Endothelial cell of umbilical vein (primary cell): ENCODE measurements at regions of chr14 and their contacts with region 1.

Region 1: GRCh38 chr14:103788086-103788485 is 59.3 kb downstream of the PPP1R13B start:
- DNase-seq: no peak
- H3K4me3 ChIP-seq: no peak overlapping the region
- H3K27ac ChIP-seq: no peak overlapping the region
- H3K4me1 ChIP-seq: no peaks in the 10 kb centered on the region
- H3K27me3 ChIP-seq: no peaks in the 10 kb centered on the region
- CTCF ChIP-seq: no peak
- POLR2A ChIP-seq: no peak

Region 2: DNA sequence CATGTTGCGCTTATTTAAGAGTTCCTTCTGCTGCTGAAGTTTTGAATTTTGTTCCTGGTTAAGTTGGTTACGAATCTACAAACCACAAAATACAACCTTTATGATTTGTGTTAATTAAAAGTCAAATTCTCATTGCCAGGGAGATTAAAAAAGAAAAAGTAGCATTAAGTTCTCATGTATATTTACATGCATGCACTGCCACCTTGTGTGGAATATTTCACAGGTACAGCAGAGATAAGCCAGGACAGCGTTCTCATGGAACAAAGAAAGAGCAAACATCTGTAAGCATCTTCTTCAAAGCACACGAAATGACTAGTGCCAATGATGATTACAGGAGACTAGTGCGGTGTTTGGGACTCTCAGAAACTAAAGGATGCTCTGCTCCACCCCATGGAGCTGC is 38.2 kb before region 1 on chr14:
- CTCF ChIA-PET with region 1: no interaction called
- POLR2A ChIA-PET with region 1: no interaction called
- dilution Hi-C with region 1: no loop called
- intact Hi-C with region 1: loop called (anchors 1 kb)
- DNase-seq: no peak
- H3K4me3 ChIP-seq: no peak overlapping the region
- H3K27ac ChIP-seq: no peak overlapping the region
- H3K4me1 ChIP-seq: peaks cover 24% of the 10 kb centered on the region
- H3K27me3 ChIP-seq: no peaks in the 10 kb centered on the region
- CTCF ChIP-seq: no peak
- POLR2A ChIP-seq: no peak